H1 (cell line): ENCODE measurements at regions of chr7 and their contacts with region 1.

Region 1: DNA sequence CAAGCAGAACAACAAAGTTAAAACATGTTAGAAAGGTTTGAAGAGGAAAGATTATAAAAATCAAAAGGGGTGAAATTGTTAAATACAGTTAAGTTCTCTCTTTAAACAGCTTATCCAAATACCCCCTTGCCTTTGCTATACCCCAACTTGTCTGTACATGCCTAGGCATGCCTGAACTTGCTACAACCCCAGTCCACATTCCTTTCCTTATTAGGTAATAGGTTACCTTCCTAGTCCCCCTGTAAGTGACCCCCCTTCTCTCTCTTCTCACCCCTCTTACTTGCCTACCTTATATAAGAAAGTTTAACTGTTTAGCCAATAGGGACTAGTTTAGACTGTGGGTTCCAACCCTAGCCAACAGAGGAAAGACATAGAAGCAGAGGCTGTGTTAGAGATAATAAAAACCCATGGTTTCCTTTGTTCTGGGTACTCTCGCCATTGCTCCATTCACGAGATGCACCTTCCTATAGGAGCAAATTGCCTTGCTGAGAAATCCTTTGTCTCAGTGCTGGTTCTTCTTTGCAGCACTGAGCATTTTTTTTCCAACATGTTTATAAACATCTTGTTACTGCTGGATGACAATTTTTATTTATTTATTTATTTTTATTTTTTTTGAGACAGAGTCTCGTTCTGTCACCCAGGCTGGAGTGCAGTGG is 282.2 kb upstream of the GALNT17 start:
- DNase-seq: no peak
- H3K4me3 ChIP-seq: no peak overlapping the region
- H3K27ac ChIP-seq: peak overlapping the region; percentile 91
- H3K4me1 ChIP-seq: peaks cover 0 to 4% (median under 1%) of the 10 kb centered on the region in 4 experiments; a peak in 3 of 7 replicates
- H3K27me3 ChIP-seq: no peaks in the 10 kb centered on the region
- CTCF ChIP-seq: no peak
- EP300 ChIP-seq: peak in 1 of 2 experiments; percentile 95; a peak in 1 of 3 replicates
- POLR2A ChIP-seq: peak in 1 of 2 experiments; percentile 63; a peak in 2 of 3 replicates
- RAD21 ChIP-seq: no peak

Region 2: DNA sequence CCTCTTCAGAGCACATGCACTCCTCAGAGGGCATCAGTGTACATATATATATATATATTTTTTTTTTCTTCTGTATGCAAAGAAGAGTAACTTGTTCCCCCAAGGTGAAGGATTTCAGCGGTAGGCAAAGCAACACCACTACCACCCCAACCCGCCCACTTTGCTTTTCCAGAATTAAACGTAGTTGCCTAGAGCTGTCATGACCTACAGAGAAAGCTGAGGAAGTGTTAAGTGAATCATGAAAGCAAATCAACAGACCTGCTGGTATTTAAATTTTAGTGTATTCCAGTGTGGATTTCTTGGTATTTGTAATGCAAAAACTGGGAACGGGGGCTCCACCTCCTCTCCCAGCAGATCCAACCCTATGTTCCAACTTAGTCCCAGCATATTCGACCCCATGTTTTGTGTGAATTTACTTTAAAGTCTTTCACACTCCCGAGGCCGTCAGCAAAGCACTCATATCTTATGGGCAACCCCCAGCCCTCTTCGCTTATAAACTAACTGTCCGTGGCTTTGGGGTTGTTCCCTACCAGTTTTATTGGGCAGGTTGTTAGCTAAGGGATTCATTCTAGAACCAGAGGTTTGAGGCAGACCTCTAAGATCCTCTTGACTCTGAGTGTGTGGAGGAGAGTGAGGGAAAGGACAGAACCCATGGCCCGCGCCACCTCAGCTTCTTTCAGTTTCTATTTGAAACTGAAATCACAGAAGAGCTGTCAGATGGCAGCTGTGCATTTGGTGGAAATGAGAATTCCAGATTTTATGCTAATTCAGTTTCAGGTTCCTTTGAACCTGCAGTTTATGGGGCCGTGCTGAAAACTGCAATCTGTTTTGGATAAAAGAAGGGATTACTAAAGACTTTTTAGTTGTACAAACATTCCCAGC is 168.0 kb before region 1 on chr7:
- CTCF ChIA-PET with region 1: no interaction called
- POLR2A ChIA-PET with region 1: no interaction called
- DNase-seq: no peak
- H3K4me3 ChIP-seq: peak overlapping the region in 3 of 4 experiments; percentile 3 to 41 (median 6); a peak in 2 of 8 replicates
- H3K27ac ChIP-seq: no peak overlapping the region
- H3K4me1 ChIP-seq: peaks cover 1 to 12% (median 6%) of the 10 kb centered on the region in 4 experiments; a peak in 5 of 7 replicates
- H3K27me3 ChIP-seq: peaks cover 8 to 54% (median 38%) of the 10 kb centered on the region in 4 experiments
- CTCF ChIP-seq: no peak
- EP300 ChIP-seq: no peak
- POLR2A ChIP-seq: no peak
- RAD21 ChIP-seq: no peak

Region 3: DNA sequence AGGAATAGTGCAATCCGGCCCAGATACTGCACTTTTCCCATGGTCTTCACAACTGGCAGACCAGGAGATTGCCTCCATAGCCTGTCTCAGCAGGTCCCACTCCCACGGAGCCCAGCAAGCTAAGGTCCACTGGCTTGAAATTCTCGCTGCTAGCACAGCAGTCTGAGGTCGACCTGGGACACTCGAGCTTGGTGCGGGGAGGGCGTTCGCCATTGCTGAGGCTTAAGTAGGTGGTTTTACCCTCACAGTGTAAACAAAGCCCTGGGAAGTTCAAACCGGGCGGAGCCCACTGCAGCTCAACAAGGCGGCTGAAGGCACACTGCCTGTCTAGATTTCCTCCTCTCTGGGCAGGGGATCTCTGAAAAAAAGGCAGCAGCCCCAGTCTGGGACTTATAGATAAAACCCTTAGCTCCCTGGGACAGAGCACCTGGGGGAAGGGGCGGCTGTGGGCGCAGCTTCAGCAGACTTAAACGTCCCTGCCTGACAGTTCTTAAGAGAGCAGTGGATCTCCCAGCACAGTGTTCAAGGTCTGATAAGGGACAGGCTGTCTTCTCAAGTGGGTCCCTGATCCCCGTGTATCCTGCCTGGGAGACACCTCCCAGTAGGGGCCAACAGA is 11.3 kb before region 1 on chr7:
- CTCF ChIA-PET with region 1: no interaction called
- POLR2A ChIA-PET with region 1: interaction called, 12 read pairs
- DNase-seq: no peak
- H3K4me3 ChIP-seq: no peak overlapping the region
- H3K27ac ChIP-seq: no peak overlapping the region
- H3K4me1 ChIP-seq: no peaks in the 10 kb centered on the region; a peak in 1 of 7 replicates
- H3K27me3 ChIP-seq: no peaks in the 10 kb centered on the region
- CTCF ChIP-seq: no peak
- EP300 ChIP-seq: no peak
- POLR2A ChIP-seq: no peak
- RAD21 ChIP-seq: no peak

Region 4: DNA sequence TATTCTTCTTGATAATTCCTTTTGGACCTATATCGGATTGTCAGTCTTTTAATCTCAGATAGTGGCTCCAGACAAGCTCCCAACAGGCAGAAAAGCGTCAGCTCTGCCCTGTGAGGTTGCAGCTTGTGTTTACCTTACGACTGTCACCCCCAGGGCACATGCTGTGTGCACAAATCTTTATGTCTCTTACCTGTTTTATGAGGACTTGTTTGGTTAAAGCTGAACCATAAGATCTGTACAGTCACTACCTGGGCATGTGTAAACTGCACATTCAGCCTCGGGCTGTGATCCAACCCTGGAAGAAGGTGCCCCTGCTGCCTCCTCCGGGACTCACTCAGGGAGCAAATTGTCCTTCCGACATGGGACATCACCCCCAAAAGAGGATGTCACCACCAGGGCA is 402.0 kb after region 1 on chr7:
- CTCF ChIA-PET with region 1: no interaction called
- POLR2A ChIA-PET with region 1: no interaction called
- DNase-seq: no peak
- H3K4me3 ChIP-seq: no peak overlapping the region
- H3K27ac ChIP-seq: no peak overlapping the region
- H3K4me1 ChIP-seq: peaks cover 1 to 17% (median 8%) of the 10 kb centered on the region in 4 experiments
- H3K27me3 ChIP-seq: no peaks in the 10 kb centered on the region
- CTCF ChIP-seq: no peak
- EP300 ChIP-seq: no peak
- POLR2A ChIP-seq: no peak
- RAD21 ChIP-seq: no peak

Region 5: DNA sequence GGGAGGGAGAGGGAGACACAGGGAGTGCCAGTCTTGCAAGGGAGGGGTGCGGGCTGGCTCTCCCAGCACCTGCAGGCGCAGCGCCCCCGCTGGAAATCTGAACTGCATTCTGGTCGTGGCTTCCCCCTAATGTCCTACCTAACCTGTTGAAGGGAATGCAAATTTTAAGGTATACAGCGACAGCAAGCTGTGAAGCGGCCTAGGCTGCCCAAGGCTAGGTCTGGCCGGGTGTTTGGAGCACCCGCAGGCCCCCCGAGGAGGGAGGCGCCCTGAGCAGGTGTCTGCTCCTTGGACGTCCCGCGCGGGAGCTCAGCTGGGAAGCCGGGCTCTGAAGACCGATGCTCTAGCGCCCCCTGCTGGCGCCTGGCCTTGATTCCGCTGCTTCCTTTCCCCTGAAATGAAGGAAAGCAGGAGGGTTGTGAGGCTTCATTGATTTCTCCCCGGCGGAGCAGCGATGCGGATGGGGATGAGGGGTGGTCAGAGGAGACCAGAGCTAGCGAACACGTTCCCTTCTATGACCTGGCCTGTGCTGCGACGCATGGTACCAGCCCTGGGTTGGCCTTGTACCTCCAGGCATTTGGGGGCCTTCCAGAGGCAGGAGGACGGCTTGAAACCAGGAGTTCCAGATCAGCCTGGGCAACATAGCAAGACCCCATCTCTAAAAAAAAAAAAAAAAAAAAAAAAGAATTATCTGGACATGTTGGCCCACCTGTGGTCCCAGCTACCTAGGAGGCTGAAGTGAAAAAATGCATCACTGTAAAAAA is 883.6 kb after region 1 on chr7:
- CTCF ChIA-PET with region 1: interaction called, 11 read pairs
- POLR2A ChIA-PET with region 1: no interaction called
- DNase-seq: peak; percentile 87 to 99
- H3K4me3 ChIP-seq: peak overlapping the region in 3 of 4 experiments; percentile 34 to 57 (median 53); a peak in 7 of 8 replicates
- H3K27ac ChIP-seq: no peak overlapping the region
- H3K4me1 ChIP-seq: peaks cover 0 to 4% (median 1%) of the 10 kb centered on the region in 4 experiments; a peak in 4 of 7 replicates
- H3K27me3 ChIP-seq: no peaks in the 10 kb centered on the region
- CTCF ChIP-seq: peak; percentile 83 to 85 (median 83)
- EP300 ChIP-seq: peak in 1 of 2 experiments; percentile 46; a peak in 1 of 3 replicates
- POLR2A ChIP-seq: no peak
- RAD21 ChIP-seq: peak; percentile 90 to 94